ENCODE measurements at regions of chr1 and their contacts with region 1.

Region 1: GRCh38 chr1:188277771-188278170 is 1449.0 kb downstream of the PLA2G4A start:
- DNase-seq: no peak
- ATAC-seq: no peak
- H3K4me3 ChIP-seq: no peak overlapping the region
- H3K4me3 Mint-ChIP-seq: no peak overlapping the region
- H3K27ac ChIP-seq: no peak overlapping the region
- H3K27ac Mint-ChIP-seq: no peak overlapping the region
- H3K4me1 ChIP-seq: no peaks in the 10 kb centered on the region
- H3K4me1 Mint-ChIP-seq: no peaks in the 10 kb centered on the region
- H3K27me3 ChIP-seq: no peaks in the 10 kb centered on the region
- H3K27me3 Mint-ChIP-seq: no peaks in the 10 kb centered on the region
- CTCF ChIP-seq: no peak

Region 2: GRCh38 chr1:188295157-188295556 is 17.4 kb after region 1 on chr1:
- CTCF ChIA-PET with region 1: no interaction called
- POLR2A ChIA-PET with region 1: no interaction called
- intact Hi-C with region 1: loop called in 1 of 2 experiments (anchors 2 kb)
- DNase-seq: no peak
- ATAC-seq: no peak
- H3K4me3 ChIP-seq: no peak overlapping the region
- H3K4me3 Mint-ChIP-seq: no peak overlapping the region
- H3K27ac ChIP-seq: no peak overlapping the region
- H3K27ac Mint-ChIP-seq: no peak overlapping the region
- H3K4me1 ChIP-seq: no peaks in the 10 kb centered on the region
- H3K4me1 Mint-ChIP-seq: no peaks in the 10 kb centered on the region
- H3K27me3 ChIP-seq: no peaks in the 10 kb centered on the region
- H3K27me3 Mint-ChIP-seq: no peaks in the 10 kb centered on the region
- CTCF ChIP-seq: no peak

Measured in CD4-positive, alpha-beta T cell (primary cell).